Activated naive CD4-positive, alpha-beta T cell treated with anti-CD3 and anti-CD28 coated beads for 36 hours (primary cell): ENCODE measurements at regions of chr10 and their contacts with region 1.

Region 1: GRCh38 chr10:117537436-117537903 is 5.1 kb upstream of the EMX2 start:
- DNase-seq: no peak
- H3K4me3 Mint-ChIP-seq: no peak overlapping the region
- H3K27ac Mint-ChIP-seq: no peak overlapping the region
- H3K4me1 Mint-ChIP-seq: peaks cover 22% of the 10 kb centered on the region
- H3K27me3 Mint-ChIP-seq: peaks cover 71% of the 10 kb centered on the region

Region 2: GRCh38 chr10:116733566-116733965 is 803.9 kb before region 1 on chr10:
- CTCF ChIA-PET with region 1: no interaction called
- intact Hi-C with region 1: no loop called
- DNase-seq: no peak
- H3K4me3 Mint-ChIP-seq: no peak overlapping the region
- H3K27ac Mint-ChIP-seq: no peak overlapping the region
- H3K4me1 Mint-ChIP-seq: no peaks in the 10 kb centered on the region
- H3K27me3 Mint-ChIP-seq: peaks cover 69% of the 10 kb centered on the region

Region 3: DNA sequence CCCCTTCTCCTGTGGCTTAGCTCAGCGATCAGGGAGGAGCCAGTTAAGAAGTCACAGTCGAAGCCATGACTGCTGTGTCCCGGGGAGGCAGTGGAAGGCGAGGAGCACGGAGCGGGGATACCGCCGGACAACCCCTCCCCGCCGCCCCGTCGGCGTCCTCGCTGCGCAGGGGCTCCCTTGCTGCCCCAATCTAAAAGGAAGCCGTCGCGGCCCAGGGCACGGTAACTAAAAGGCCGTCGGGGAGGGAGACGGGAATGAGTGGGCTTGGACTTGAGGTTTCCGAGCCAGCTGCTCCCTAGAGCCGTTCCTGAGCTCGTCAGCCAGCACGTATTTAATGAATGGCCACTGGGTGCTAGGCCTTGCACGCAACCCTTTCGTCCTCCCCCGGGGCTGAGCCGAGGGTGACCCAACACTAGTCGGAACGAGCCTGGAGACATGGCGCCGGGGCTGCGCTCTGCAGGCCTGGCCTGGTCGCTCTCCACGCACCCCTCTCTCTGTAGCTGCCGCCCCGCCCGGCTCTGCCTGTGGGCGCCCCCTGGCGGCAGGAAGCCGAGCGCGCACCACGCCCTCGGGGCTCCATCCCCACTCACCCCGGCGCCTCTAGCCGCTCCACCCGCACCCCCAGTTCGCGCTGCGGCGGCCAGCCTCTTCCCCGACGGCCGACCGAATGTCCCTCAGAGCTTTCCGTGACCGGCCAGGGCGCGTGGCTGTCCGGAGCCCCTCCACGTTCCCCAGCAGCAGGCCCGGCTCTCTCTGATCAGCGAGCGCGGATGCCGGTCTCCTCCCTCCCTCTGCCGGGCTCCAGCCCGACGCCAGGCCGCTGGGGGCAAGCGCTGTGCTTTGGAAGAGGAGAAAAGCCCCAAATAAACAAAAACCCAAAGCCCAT is 369.4 kb before region 1 on chr10:
- CTCF ChIA-PET with region 1: no interaction called
- intact Hi-C with region 1: loop called (anchors 10 kb)
- DNase-seq: peak; percentile 65
- H3K4me3 Mint-ChIP-seq: no peak overlapping the region
- H3K27ac Mint-ChIP-seq: no peak overlapping the region
- H3K4me1 Mint-ChIP-seq: peaks cover 44% of the 10 kb centered on the region
- H3K27me3 Mint-ChIP-seq: peaks cover 77% of the 10 kb centered on the region

Region 4: DNA sequence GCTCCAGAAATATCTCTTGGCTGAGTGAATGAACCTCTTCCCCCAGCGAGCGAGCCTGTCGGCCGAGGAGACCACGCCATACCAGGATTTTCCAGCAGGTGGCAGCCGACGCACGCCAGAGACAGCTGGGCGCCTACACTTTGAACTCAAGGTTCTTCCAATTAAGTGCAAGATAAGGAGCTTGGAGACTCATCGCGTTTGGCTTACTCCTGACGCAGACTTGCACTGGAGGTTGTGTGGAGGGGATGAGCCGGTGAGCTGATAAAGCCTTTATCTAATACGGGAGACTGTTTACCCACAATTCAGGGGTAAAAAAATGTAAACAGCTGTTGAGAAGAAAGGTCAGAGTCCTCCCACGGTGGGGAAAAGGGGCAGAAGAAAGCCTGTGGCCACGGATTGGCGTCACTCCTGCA is 40.8 kb before region 1 on chr10:
- CTCF ChIA-PET with region 1: interaction called, 4 read pairs
- intact Hi-C with region 1: loop called (anchors 2 kb)
- DNase-seq: peak; percentile 80
- H3K4me3 Mint-ChIP-seq: no peak overlapping the region
- H3K27ac Mint-ChIP-seq: no peak overlapping the region
- H3K4me1 Mint-ChIP-seq: peaks cover 2% of the 10 kb centered on the region
- H3K27me3 Mint-ChIP-seq: peaks cover 26% of the 10 kb centered on the region

Region 5: GRCh38 chr10:117757086-117757720 is 219.7 kb after region 1 on chr10:
- CTCF ChIA-PET with region 1: interaction called, 3 read pairs
- intact Hi-C with region 1: loop called (anchors 5 kb)
- DNase-seq: no peak
- H3K4me3 Mint-ChIP-seq: no peak overlapping the region
- H3K27ac Mint-ChIP-seq: no peak overlapping the region
- H3K4me1 Mint-ChIP-seq: no peaks in the 10 kb centered on the region
- H3K27me3 Mint-ChIP-seq: peaks cover 15% of the 10 kb centered on the region

Region 6: GRCh38 chr10:118241229-118242137 is 704.0 kb after region 1 on chr10:
- CTCF ChIA-PET with region 1: interaction called, 6 read pairs
- intact Hi-C with region 1: loop called (anchors 1 kb)
- DNase-seq: peak; percentile 82
- H3K4me3 Mint-ChIP-seq: no peak overlapping the region
- H3K27ac Mint-ChIP-seq: no peak overlapping the region
- H3K4me1 Mint-ChIP-seq: no peaks in the 10 kb centered on the region
- H3K27me3 Mint-ChIP-seq: peaks cover 52% of the 10 kb centered on the region